OCI-LY7 (cell line): ENCODE measurements at regions of chr4 and their contacts with region 1.

Region 1: DNA sequence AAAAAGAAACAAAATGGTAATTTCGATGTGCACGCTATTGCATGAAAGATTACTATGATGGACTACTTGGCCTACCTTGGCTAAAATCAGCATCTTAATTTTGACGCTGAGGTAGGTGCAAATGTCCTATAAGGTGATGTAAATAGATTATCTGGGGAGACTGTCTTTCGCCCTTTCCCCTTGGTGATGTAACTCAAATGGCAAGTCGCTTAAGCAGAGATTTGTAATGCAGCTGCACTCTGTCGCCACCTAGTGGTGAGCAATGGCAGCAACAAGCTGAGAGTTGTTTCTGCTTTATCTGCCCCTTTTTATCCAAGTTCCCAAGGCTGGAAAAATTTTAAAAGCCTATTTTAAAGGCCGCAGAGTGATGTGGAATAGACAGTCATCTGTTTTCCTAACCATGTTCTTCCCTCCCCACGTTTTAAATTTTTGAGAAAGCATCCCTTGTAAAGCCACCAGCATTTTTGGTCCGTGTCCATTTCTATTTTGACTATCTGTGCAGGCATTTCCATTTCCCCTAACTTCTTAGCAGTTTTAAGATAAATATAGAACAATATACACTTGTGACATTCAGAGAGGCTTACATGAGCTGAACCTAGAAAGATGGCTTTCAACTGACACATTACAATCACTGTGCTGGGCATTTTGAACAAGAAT is 62.4 kb upstream of the PDLIM3 start:
- DNase-seq: peak; percentile 78
- H3K4me3 ChIP-seq: no peak overlapping the region
- H3K27ac ChIP-seq: no peak overlapping the region
- H3K4me1 ChIP-seq: peaks cover 13% of the 10 kb centered on the region
- CTCF ChIP-seq: peak; percentile 100

Region 2: DNA sequence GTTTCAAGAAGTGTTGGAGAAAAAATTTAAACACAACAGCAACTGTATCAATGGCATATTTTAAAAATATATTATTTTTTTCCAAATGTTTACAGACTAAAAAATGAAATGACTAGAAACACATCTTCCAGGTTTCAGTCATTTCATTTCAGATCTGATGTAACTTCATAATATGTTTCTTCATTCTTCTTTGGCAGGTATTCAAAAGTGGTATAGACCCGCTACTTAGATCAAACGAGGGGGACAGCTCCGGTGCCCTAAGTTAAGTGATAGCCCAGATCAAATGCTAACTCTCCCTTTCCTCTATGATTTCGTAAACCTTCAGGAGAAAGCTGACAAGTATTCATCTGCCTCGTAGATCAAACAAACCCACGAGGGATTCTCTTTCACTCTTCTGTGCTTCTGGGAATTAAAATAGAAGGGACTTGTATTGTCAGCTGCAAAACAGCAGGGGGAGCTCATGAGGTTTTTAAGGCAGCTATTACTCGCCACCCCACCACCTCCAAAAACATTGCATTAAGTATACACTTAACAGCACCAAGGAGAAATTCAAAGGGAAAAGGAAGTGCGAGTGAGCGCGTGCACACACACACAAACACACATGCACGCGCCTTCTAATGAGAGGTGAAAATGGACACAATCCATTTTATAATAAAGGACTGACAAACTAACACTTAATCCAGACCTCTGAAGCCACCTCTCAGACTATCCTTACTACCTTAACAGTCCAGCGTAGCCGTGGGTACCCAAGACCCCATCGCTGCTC is 558.0 kb before region 1 on chr4:
- CTCF ChIA-PET with region 1: no interaction called
- POLR2A ChIA-PET with region 1: no interaction called
- intact Hi-C with region 1: loop called (anchors 2 kb)
- DNase-seq: peak; percentile 80
- H3K4me3 ChIP-seq: peak overlapping the region; percentile 54
- H3K27ac ChIP-seq: no peak overlapping the region
- H3K4me1 ChIP-seq: peaks cover 6% of the 10 kb centered on the region
- CTCF ChIP-seq: peak; percentile 95

Region 3: GRCh38 chr4:185142912-185143595 is 454.6 kb before region 1 on chr4 and contains the start of gene SLC25A4:
- CTCF ChIA-PET with region 1: no interaction called
- POLR2A ChIA-PET with region 1: no interaction called
- intact Hi-C with region 1: loop called (anchors 5 kb)
- DNase-seq: peak; percentile 93
- H3K4me3 ChIP-seq: peak within 1 kb of the TSS; percentile 91
- H3K27ac ChIP-seq: peak within 1 kb of the TSS; percentile 30
- H3K4me1 ChIP-seq: peaks cover 19% of the 10 kb centered on the region
- CTCF ChIP-seq: peak; percentile 63
- total RNA-seq, gene SLC25A4: 24.1 and 29.6 TPM in 2 replicates

Region 4: DNA sequence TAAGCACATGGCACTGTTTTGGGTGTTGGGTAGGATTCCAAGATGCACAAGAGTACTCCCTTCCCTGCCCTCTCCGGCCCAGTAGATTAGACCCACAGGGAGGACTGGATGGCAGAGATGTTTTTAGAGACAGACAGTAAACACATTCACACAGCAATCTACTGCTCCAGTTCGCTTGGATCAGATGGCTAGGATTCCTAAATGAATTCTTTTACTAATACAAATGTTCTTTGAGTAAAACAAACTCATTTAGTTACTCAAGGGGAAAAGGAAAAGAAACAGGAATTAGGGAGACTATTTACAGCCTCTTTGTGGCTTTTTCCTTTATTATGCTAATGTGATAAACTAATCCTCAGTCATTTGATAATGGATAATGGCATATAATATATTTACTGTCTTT is 382.4 kb before region 1 on chr4:
- CTCF ChIA-PET with region 1: no interaction called
- POLR2A ChIA-PET with region 1: no interaction called
- intact Hi-C with region 1: no loop called
- DNase-seq: no peak
- H3K4me3 ChIP-seq: no peak overlapping the region
- H3K27ac ChIP-seq: no peak overlapping the region
- H3K4me1 ChIP-seq: peaks cover 89% of the 10 kb centered on the region
- CTCF ChIP-seq: no peak

Region 5: DNA sequence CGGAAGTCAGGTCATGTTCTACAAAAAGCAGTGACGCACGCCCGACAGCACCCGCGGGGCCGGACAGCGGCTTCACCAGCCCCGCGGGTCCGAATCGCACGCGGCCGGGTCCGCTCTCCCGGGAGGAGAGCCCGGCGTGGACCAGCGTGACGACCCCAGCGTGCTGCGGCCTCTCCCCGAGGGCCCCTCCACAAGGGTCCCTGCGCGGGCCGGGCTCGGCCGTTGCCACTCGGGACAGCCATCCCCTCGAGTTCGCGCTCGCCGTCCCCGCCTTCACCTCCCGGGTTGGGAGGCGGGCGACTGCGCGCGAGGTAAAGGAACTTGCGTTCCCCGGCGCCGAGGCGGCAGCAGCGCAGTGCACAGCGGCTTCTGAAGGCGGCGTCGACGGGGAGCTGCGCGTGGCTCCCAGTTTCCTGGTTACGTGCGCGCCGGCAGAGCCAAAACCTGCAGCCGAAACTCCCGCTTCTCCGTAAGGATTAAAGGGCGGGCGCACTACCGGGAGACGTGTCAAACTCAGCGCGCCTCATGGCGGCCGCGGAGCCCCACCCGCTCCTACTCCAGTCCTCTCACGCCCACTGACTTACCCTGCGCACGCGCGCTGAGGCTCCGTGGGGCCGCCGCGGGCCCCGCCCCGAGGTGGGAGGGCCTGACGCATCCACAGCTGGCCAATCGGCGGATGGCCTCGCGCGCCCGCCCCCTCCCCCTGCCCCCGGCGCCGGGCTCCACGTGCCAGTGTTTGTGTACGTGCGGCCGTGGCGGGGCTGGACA is 201.5 kb before region 1 on chr4:
- CTCF ChIA-PET with region 1: no interaction called
- POLR2A ChIA-PET with region 1: interaction called, 3 read pairs
- intact Hi-C with region 1: loop called (anchors 1 kb)
- DNase-seq: peak; percentile 97
- H3K4me3 ChIP-seq: peak overlapping the region; percentile 75
- H3K27ac ChIP-seq: peak overlapping the region; percentile 70
- H3K4me1 ChIP-seq: peaks cover 58% of the 10 kb centered on the region
- CTCF ChIP-seq: no peak

Region 6: DNA sequence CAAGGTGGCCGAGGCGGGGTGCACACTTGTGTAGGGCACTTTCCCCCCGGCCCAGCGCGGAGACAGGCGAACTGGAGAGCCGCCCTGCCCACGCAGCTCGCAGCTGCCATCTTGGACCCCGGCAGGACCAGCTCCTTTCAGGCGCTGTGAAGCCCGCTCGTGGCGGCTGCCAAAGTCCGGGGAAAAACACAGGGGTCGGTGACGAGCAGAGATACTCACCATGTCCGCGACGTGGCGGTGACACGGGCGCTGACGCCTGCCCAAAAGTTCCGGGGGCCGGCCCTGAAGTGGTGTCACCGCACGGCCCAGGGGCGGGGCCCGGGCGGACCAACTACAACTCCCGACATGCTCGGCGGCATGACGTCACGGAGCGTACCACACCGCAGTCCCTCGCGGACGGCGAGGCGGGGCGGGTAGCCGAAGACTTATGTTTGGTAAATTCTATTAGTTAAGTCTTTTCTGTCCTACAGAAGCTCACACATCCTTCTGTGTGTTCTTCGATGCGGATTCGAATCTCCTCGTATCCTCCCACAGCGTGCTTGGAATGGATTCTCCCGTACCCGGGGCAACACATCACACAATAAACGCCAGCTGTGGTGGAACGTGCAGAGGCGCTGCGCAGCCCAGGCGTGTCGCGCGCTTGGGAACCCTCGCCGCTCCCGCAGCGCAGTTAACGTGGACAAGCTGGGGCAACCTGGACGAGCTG is 171.9 kb before region 1 on chr4 and contains the start of gene UFSP2:
- CTCF ChIA-PET with region 1: no interaction called
- POLR2A ChIA-PET with region 1: interaction called, 5 read pairs
- intact Hi-C with region 1: loop called (anchors 5 kb)
- DNase-seq: peak; percentile 94
- H3K4me3 ChIP-seq: peak within 1 kb of the TSS; percentile 88
- H3K27ac ChIP-seq: peak within 1 kb of the TSS; percentile 54
- H3K4me1 ChIP-seq: peaks cover 18% of the 10 kb centered on the region
- CTCF ChIP-seq: no peak
- total RNA-seq, gene UFSP2: 14.0 and 17.3 TPM in 2 replicates

Region 7: GRCh38 chr4:185479507-185479971 is 118.1 kb before region 1 on chr4:
- CTCF ChIA-PET with region 1: interaction called, 3 read pairs
- POLR2A ChIA-PET with region 1: interaction called, 44 read pairs
- intact Hi-C with region 1: no loop called
- DNase-seq: peak; percentile 79
- H3K4me3 ChIP-seq: peak overlapping the region; percentile 69
- H3K27ac ChIP-seq: peak overlapping the region; percentile 95
- H3K4me1 ChIP-seq: peaks cover 58% of the 10 kb centered on the region
- CTCF ChIP-seq: no peak

Region 8: GRCh38 chr4:185587427-185588161 is 10.1 kb before region 1 on chr4:
- CTCF ChIA-PET with region 1: no interaction called
- POLR2A ChIA-PET with region 1: interaction called, 21 read pairs
- intact Hi-C with region 1: no loop called
- DNase-seq: peak; percentile 90
- H3K4me3 ChIP-seq: peak overlapping the region; percentile 57
- H3K27ac ChIP-seq: peak overlapping the region; percentile 78
- H3K4me1 ChIP-seq: peaks cover 37% of the 10 kb centered on the region
- CTCF ChIP-seq: no peak